ENCODE measurements at regions of chr7 and their contacts with region 1.

Region 1: GRCh38 chr7:28626624-28627262 is 214.4 kb downstream of the CREB5 start:
- DNase-seq: no peak
- ATAC-seq: no peak
- H3K4me3 ChIP-seq: no peak overlapping the region
- H3K27ac ChIP-seq: peak overlapping the region; percentile 39 to 77 (median 70)
- H3K4me1 ChIP-seq: peaks cover 60 to 74% of the 10 kb centered on the region in 2 donors
- H3K27me3 ChIP-seq: no peaks in the 10 kb centered on the region
- CTCF ChIP-seq: peak; percentile 46 to 74 (median 61)
- POLR2A ChIP-seq: no peak

Region 2: GRCh38 chr7:27179503-27180430 is 1447.0 kb before region 1 on chr7:
- in situ Hi-C with region 1: no loop called
- intact Hi-C with region 1: loop called (anchors 10 kb)
- DNase-seq: peak; percentile 65 to 79
- ATAC-seq: peak; percentile 40 to 53
- H3K4me3 ChIP-seq: peak overlapping the region; percentile 47 to 56 (median 52)
- H3K27ac ChIP-seq: peak overlapping the region; percentile 90 to 99 (median 95)
- H3K4me1 ChIP-seq: peaks cover 43 to 61% of the 10 kb centered on the region in 2 donors
- H3K27me3 ChIP-seq: peaks cover 0 to 8% (median 3%) of the 10 kb centered on the region in 3 donors
- CTCF ChIP-seq: peak; percentile 91 to 96 (median 95)
- POLR2A ChIP-seq: peak; percentile 79 to 90

Region 3: DNA sequence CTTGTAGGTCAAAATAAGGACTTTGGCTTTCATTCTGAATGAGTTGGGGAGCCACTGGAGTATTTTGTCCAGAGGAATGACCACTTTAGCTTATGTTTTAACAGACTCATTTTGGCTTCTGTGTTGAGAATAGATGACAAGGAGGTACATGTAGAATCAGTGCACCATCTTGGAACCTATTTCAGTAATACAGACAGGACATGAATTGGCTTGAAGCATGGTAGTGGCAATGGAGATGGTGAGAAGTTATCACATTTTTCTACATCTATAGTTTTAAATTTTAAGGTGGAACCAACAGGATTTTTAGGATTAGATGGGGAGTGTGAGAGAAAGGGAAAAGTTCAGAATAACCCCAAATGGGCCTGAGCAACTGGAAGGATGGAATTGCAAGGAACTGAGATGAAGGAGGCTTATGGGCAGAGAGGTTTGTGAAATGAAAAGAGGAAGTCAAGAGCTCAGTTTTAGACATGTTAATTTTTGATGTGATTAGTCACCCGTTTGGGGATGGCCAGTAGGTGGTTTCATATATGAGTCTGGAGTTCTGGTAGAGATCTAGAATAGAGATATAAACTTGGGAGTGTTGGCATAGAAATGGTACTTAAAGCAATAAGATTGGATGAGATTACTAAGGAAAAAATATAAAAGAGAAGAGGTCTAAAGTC is 356.9 kb before region 1 on chr7:
- in situ Hi-C with region 1: no loop called
- intact Hi-C with region 1: no loop called
- DNase-seq: no peak
- ATAC-seq: no peak
- H3K4me3 ChIP-seq: no peak overlapping the region
- H3K27ac ChIP-seq: no peak overlapping the region
- H3K4me1 ChIP-seq: no peaks in the 10 kb centered on the region
- H3K27me3 ChIP-seq: no peaks in the 10 kb centered on the region
- CTCF ChIP-seq: no peak
- POLR2A ChIP-seq: no peak

Region 4: GRCh38 chr7:28358423-28358868 is 268.3 kb before region 1 on chr7:
- in situ Hi-C with region 1: no loop called
- intact Hi-C with region 1: no loop called
- DNase-seq: no peak
- ATAC-seq: no peak
- H3K4me3 ChIP-seq: no peak overlapping the region
- H3K27ac ChIP-seq: no peak overlapping the region
- H3K4me1 ChIP-seq: no peaks in the 10 kb centered on the region
- H3K27me3 ChIP-seq: no peaks in the 10 kb centered on the region
- CTCF ChIP-seq: no peak
- POLR2A ChIP-seq: no peak

Region 5: DNA sequence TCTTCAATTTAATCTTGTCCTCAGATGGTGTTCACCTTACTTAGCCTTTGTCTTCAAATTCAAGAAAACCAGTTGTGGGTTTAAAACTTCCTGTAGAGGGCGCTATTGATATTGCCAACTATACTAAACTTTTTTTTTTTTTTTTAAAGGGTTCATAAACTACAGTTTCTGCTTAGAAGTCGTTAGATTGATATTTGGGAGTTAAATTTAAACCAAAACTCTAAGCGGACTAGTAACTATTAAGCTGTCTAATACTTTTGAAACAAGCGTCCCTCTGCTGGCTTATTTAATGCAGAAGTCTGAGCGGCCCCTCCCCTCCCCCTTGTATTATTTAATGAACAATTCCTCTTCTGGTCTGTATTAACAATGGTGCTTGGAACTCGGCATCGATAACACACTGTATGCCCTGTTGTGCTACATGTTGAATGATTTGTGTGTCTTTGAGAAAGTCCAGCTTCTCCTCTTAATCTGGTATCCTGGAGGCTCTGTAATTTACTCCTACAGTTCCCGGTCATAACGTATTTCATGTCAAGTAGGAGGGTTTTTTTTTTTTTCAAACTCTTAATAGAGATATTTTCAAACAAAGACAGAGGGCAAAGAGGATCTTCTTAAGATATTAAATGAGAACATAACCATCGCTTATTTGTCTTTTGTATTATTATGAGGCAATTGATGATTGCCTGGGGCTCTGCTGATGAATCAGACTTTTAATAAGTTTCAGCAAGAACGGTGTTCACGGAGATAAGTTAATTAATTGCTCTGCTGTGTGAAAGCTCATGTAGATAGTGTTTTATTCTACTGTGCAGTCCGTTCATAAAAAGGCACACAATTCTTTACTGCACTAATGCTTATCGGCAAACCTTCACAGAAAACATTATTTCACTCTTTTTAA is 237.0 kb before region 1 on chr7:
- in situ Hi-C with region 1: loop called (anchors 5 to 10 kb)
- intact Hi-C with region 1: loop called (anchors 5 kb)
- DNase-seq: no peak
- ATAC-seq: peak; percentile 65 to 69
- H3K4me3 ChIP-seq: peak overlapping the region; percentile 42 to 61 (median 50)
- H3K27ac ChIP-seq: peak overlapping the region in 2 of 4 donors; percentile 46 to 47
- H3K4me1 ChIP-seq: peaks cover 6 to 8% of the 10 kb centered on the region in 2 donors
- H3K27me3 ChIP-seq: no peaks in the 10 kb centered on the region
- CTCF ChIP-seq: peak; percentile 71 to 89 (median 84)
- POLR2A ChIP-seq: no peak

Region 6: DNA sequence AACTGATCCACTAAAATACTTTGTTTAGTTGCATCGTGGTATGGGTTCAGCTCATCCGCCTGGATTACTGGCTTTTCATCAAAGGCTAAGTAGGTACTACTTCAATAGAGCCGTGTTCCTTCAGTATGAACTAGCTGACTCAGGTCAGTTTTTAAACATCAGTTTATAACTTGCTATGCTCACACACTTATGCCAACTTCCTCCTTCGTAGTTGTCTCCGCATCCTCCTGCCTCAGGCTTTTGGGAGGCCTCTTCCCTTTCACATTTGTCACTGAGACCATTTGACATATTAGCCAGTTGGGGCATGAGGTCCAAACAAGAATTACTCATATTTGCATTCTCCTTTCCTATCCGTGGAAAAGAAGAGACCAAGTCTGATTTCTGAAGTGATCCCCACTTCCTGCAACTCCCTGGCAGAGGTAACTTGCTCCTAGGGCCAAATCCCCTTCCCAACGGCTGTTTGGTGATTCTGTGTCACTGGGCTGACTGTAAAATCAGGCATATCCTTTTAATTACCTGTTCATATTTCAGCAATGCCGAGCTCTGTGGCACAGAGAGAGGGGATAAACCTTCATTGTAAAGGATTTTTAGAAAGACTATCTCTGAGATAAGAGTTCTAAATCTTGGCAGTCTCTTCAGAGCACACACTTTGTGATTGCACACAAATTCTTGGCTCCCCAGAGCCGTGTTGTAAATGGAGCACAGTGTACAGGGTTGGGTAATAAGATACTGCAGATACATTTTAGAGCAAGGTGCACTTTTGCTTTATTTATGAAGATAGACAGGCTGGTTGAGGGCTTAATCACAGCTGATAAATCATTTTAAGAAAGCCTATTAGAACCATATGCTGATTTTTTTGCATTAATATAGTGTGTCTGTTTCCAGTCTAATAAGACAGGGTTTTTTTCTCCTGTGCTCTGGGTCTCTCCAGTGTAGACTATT is 106.4 kb before region 1 on chr7:
- in situ Hi-C with region 1: no loop called
- intact Hi-C with region 1: loop called (anchors 5 kb)
- DNase-seq: peak in 1 of 2 donors; percentile 20
- ATAC-seq: peak; percentile 94 to 96
- H3K4me3 ChIP-seq: no peak overlapping the region
- H3K27ac ChIP-seq: peak overlapping the region in 2 of 4 donors; percentile 38 to 57
- H3K4me1 ChIP-seq: peaks cover 10 to 17% of the 10 kb centered on the region in 2 donors
- H3K27me3 ChIP-seq: no peaks in the 10 kb centered on the region
- CTCF ChIP-seq: no peak
- POLR2A ChIP-seq: no peak

Region 7: DNA sequence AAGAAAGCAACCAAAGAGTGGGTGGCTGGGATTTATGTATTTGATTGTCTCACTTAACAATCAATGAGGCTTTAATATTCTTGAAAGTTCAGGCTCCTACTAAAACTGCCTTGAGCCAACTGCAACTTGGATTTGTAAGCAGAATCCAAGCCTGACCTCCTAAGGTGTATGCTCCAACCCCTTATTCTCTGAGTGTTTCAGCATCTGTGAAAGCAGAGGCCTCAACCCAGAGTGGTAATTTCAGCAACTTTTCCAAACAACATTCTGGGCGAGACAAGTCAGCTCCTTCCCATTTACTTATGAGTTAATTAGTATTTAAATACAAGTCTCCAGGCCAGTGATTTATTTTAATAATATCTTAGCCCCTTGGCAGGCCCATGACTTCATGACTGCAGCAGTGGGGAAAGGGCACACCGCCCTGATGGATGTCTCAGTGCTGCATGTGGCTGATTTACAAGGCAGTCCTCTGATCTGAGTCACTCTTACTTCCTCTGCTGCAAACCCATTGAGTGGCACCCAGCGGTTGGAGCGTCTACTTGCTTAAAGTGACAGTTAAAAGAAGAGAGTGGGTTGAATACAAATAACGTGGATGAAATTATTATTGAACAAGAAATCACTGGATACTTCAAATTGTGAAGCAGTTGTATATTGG is 122.3 kb after region 1 on chr7:
- in situ Hi-C with region 1: no loop called
- intact Hi-C with region 1: loop called (anchors 10 kb)
- DNase-seq: peak; percentile 27 to 65
- ATAC-seq: peak; percentile 83 to 86
- H3K4me3 ChIP-seq: no peak overlapping the region
- H3K27ac ChIP-seq: peak overlapping the region in 1 of 4 donors; percentile 11
- H3K4me1 ChIP-seq: peaks cover 40 to 54% of the 10 kb centered on the region in 2 donors
- H3K27me3 ChIP-seq: no peaks in the 10 kb centered on the region
- CTCF ChIP-seq: no peak
- POLR2A ChIP-seq: no peak